CD14-positive monocyte (primary cell): ENCODE measurements at regions of chr6 and their contacts with region 1.

Region 1: DNA sequence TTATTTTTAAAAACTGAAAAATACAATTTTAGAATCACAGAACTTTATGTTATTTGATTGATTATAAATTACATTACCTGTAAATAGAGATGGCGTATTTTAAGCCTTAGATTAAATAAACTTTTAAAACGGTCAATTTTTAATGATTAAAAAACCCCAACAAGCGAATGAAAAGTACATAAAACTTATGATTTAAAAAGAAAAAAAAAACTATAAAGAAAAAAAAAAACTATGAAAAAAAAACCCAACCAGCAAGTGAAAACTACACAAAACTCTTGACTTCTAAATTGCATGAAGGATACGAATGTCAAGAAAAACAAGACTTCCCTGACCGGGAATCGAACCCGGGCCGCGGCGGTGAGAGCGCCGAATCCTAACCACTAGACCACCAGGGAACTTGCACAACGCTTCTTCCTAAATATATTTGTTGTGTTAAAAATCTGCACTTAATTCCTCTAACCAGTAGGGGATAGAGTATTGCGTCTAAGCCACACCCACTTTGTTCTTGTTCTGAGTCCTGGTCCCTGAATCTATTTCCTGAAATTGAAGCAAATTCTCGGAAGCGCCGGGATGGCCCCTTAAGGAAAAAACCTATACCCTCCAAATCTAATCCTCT is 10.7 kb upstream of the NCOA7 start:
- DNase-seq: peak; percentile 88 to 99 (median 92)
- H3K4me3 ChIP-seq: peak overlapping the region; percentile 64 to 98 (median 84)
- H3K4me3 Mint-ChIP-seq: no peak overlapping the region
- H3K27ac ChIP-seq: peak overlapping the region; percentile 74 to 94
- H3K27ac Mint-ChIP-seq: no peak overlapping the region
- H3K4me1 ChIP-seq: peaks cover 7 to 14% of the 10 kb centered on the region in 2 donors
- H3K4me1 Mint-ChIP-seq: no peaks in the 10 kb centered on the region
- H3K27me3 ChIP-seq: peaks cover 0 to 3% of the 10 kb centered on the region in 2 donors
- H3K27me3 Mint-ChIP-seq: peaks cover 7 to 13% (median 10%) of the 10 kb centered on the region in 3 donors
- CTCF ChIP-seq: peak; percentile 17

Region 2: DNA sequence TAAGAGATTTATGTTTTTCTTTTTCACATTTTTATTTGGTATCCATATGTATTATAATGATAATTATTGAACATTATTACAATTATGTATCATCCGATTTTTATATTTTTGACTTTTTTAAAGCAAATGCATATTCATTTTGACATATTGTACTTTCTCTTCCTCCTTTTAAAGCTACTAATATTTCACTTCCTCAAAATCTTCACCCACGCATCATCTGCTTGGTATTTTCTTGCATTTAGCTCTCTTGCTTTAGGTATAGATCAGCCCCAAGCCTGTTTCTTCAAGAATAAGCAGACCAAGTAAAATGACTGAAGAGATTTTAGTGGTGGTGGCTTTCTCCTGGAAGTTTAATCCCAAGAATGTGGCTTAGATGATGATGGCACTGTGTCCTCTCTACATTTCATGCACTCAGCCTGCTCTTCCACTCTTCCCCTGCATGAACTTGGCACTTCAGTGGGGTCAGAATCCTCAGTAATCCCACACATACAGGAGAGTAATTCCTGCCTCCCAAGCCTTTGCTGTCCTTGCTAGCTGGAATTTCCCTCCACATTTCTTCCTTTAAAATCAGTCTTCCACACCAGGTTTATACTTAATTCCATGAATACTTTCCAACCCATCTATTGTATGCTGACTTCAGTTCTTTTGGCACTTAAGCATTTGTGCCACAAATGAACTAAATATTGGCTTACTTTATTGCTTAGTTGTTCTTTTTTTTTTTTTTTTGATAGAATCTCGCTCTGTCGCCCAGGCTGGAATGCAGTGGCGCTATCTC is 18.9 kb after region 1 on chr6:
- intact Hi-C with region 1: loop called in 1 of 2 experiments (anchors 2 kb)
- DNase-seq: peak; percentile 50 to 63 (median 57)
- H3K4me3 ChIP-seq: peak overlapping the region in 2 of 3 experiments; percentile 5 to 51
- H3K4me3 Mint-ChIP-seq: peak overlapping the region in 1 of 2 donors; percentile 71
- H3K27ac ChIP-seq: peak overlapping the region; percentile 34 to 79
- H3K27ac Mint-ChIP-seq: peak overlapping the region; percentile 76 to 95 (median 84)
- H3K4me1 ChIP-seq: peaks cover 39 to 46% of the 10 kb centered on the region in 2 donors
- H3K4me1 Mint-ChIP-seq: peaks cover 53% of the 10 kb centered on the region
- H3K27me3 ChIP-seq: no peaks in the 10 kb centered on the region
- H3K27me3 Mint-ChIP-seq: no peaks in the 10 kb centered on the region
- CTCF ChIP-seq: no peak

Region 3: GRCh38 chr6:125834348-125834747 is 54.3 kb after region 1 on chr6:
- intact Hi-C with region 1: loop called in 1 of 2 experiments (anchors 10 kb)
- DNase-seq: no peak
- H3K4me3 ChIP-seq: no peak overlapping the region
- H3K4me3 Mint-ChIP-seq: peak overlapping the region in 1 of 2 donors; percentile 15
- H3K27ac ChIP-seq: peak overlapping the region in 1 of 2 donors; percentile 60
- H3K27ac Mint-ChIP-seq: peak overlapping the region in 3 of 7 donors; percentile 67 to 77 (median 70)
- H3K4me1 ChIP-seq: peaks cover 55 to 65% of the 10 kb centered on the region in 2 donors
- H3K4me1 Mint-ChIP-seq: peaks cover 64% of the 10 kb centered on the region
- H3K27me3 ChIP-seq: no peaks in the 10 kb centered on the region
- H3K27me3 Mint-ChIP-seq: peaks cover 0 to 2% (median 2%) of the 10 kb centered on the region in 3 donors
- CTCF ChIP-seq: no peak

Region 4: GRCh38 chr6:125956506-125957390 is 176.7 kb after region 1 on chr6 and contains the start of gene HINT3:
- intact Hi-C with region 1: loop called (anchors 2 to 10 kb)
- DNase-seq: peak; percentile 98 to 99 (median 98)
- H3K4me3 ChIP-seq: peak within 1 kb of the TSS; percentile 86 to 96 (median 88)
- H3K4me3 Mint-ChIP-seq: peak within 1 kb of the TSS in 1 of 2 donors; percentile 12
- H3K27ac ChIP-seq: peak within 1 kb of the TSS; percentile 90 to 95
- H3K27ac Mint-ChIP-seq: peak within 1 kb of the TSS in 3 of 7 donors; percentile 44 to 81 (median 66)
- H3K4me1 ChIP-seq: peaks cover 26 to 27% of the 10 kb centered on the region in 2 donors
- H3K4me1 Mint-ChIP-seq: peaks cover 10% of the 10 kb centered on the region
- H3K27me3 ChIP-seq: no peaks in the 10 kb centered on the region
- H3K27me3 Mint-ChIP-seq: peaks cover 0 to 2% (median 0%) of the 10 kb centered on the region in 3 donors
- CTCF ChIP-seq: peak; percentile 98
- polyA plus RNA-seq, gene HINT3: 5.3 to 18.0 (median 12.3) TPM